Activated T-helper 1 cell treated with anti-CD3 and anti-CD28 coated beads, Interleukin-12 subunit alpha, Interleukin-12 subunit beta, Interleukin-2, Interleukin-4 antibody, amounts not matched to agents 30 ng/mL and 10 ng/mL and 1 ng/mL, durations not matched to agents 14 hours and 24 hours and 36 hours (primary cell): ENCODE measurements at regions of chr3 and their contacts with region 1.

Region 1: GRCh38 chr3:10758304-10759061 is 57.5 kb upstream of the SLC6A11 start:
- DNase-seq: no peak
- H3K4me3 Mint-ChIP-seq: no peak overlapping the region
- H3K27ac Mint-ChIP-seq: no peak overlapping the region
- H3K4me1 Mint-ChIP-seq: peaks cover 6% of the 10 kb centered on the region
- H3K27me3 Mint-ChIP-seq: peaks cover 12% of the 10 kb centered on the region

Region 2: GRCh38 chr3:10783357-10784351 is 25.2 kb after region 1 on chr3:
- intact Hi-C with region 1: loop called (anchors 1 kb)
- DNase-seq: peak; percentile 13
- H3K4me3 Mint-ChIP-seq: no peak overlapping the region
- H3K27ac Mint-ChIP-seq: no peak overlapping the region
- H3K4me1 Mint-ChIP-seq: no peaks in the 10 kb centered on the region
- H3K27me3 Mint-ChIP-seq: peaks cover 15% of the 10 kb centered on the region

Region 3: GRCh38 chr3:10883478-10884234 is 125.2 kb after region 1 on chr3:
- intact Hi-C with region 1: loop called (anchors 1 kb)
- DNase-seq: no peak
- H3K4me3 Mint-ChIP-seq: no peak overlapping the region
- H3K27ac Mint-ChIP-seq: no peak overlapping the region
- H3K4me1 Mint-ChIP-seq: no peaks in the 10 kb centered on the region
- H3K27me3 Mint-ChIP-seq: peaks cover 3% of the 10 kb centered on the region

Region 4: GRCh38 chr3:10983219-10983916 is 224.9 kb after region 1 on chr3:
- intact Hi-C with region 1: loop called (anchors 2 kb)
- DNase-seq: no peak
- H3K4me3 Mint-ChIP-seq: no peak overlapping the region
- H3K27ac Mint-ChIP-seq: no peak overlapping the region
- H3K4me1 Mint-ChIP-seq: no peaks in the 10 kb centered on the region
- H3K27me3 Mint-ChIP-seq: peaks cover 3% of the 10 kb centered on the region